Ovary (tissue), 10 donors: ENCODE measurements at regions of chr17 and their contacts with region 1.

Region 1: DNA sequence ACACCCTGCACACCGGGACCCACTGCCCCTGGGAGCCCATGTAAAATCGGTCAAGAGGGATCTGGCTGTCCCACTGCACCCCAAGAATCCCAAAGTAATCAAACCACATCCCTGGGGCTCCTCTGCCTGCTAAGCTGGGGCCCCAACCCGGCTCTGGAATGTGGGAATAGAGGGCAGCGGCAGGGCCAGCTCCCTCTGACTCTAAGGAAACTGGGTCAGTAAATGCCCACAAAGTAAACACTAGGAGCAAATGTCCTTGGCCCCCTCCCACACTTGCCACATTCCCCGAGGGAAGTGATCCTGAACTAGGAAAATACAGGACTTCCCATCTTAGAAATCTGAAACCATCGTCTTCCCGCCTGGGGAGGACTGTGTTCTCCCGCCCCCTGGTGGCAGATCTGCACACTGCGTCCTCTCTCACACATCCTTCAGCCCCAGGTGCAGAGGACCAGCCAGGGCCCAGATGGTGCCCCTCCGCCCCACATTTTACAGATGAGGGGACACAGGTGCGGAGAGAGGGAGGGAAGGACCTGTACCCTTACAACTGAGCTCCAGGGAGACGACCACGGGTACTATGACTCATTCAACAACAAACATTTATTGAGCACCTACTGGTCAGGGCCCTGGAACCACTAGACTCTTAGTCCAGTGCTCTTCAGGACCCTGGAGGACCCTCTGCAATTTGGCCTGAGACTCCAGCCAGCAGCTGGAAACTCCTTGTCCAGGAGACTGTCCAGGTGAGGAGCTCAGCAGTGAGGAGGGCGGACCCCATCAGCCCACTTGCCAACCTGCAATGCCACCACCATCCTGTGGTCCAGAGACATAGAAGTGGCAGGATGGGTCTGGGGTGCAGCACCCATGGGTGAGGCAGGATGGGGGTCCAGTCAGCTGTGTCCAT is 10.1 kb downstream of the P3H4 start:
- DNase-seq: peak; percentile 77 to 91 (median 89)
- H3K4me3 ChIP-seq: no peak overlapping the region
- H3K27ac ChIP-seq: no peak overlapping the region
- H3K4me1 ChIP-seq: peaks cover 7% of the 10 kb centered on the region
- H3K27me3 ChIP-seq: no peaks in the 10 kb centered on the region
- CTCF ChIP-seq: peak; percentile 90 to 97 (median 96)
- EP300 ChIP-seq: no peak
- POLR2A ChIP-seq: no peak

Region 2: GRCh38 chr17:41738077-41738735 is 63.4 kb before region 1 on chr17:
- intact Hi-C with region 1: loop called (anchors 1 to 2 kb)
- DNase-seq: peak; percentile 69 to 89 (median 84)
- H3K4me3 ChIP-seq: no peak overlapping the region
- H3K27ac ChIP-seq: no peak overlapping the region
- H3K4me1 ChIP-seq: peaks cover 4% of the 10 kb centered on the region
- H3K27me3 ChIP-seq: no peaks in the 10 kb centered on the region
- CTCF ChIP-seq: peak; percentile 97 to 99 (median 98)
- EP300 ChIP-seq: no peak
- POLR2A ChIP-seq: no peak

Region 3: DNA sequence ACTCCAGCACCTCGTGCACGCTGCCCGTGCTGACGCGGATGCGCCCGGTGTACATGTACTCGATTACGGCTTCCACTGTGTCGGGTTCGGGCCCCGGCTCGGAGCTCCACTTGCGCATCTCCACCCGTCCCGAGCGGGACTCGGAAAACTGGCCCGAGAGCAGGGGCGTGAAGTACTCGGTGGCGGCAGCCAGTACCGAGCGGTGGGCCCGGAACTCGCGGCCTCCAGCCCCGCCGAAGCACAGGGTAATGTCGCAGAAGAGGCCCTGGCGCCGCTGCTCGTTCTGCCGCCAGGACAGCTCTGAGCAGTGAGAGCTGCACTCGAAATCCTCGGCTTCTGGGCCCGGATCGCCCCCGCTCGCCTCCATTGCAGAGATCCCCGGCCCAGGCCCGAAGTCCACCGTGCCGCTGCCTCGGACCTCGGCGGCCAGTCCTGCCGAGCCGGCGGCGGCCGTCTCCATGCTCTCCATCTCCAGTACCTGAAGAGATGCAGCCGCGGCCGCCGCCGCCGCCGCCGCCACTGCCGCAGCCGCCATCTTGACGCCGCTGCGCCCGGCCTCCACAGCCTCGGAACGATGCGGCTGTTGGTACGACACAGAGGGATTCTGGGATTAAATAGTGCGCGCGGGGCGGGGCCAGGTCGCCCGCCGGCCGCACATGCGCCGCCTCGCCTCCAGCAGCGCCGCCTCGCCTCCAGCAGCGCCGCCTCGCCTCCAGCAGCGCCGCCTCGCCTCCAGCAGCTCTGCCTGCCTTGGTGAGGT is 63.4 kb after region 1 on chr17 and contains the start of gene KLHL11:
- intact Hi-C with region 1: loop called in 1 of 4 experiments (anchors 10 kb)
- DNase-seq: peak; percentile 80 to 92 (median 88)
- H3K4me3 ChIP-seq: peak within 1 kb of the TSS; percentile 99
- H3K27ac ChIP-seq: peak within 1 kb of the TSS; percentile 50 to 85
- H3K4me1 ChIP-seq: peaks cover 10% of the 10 kb centered on the region
- H3K27me3 ChIP-seq: no peaks in the 10 kb centered on the region
- CTCF ChIP-seq: no peak
- EP300 ChIP-seq: no peak
- POLR2A ChIP-seq: peak; percentile 90
- total RNA-seq, gene KLHL11: 18.9 to 30.5 (median 20.6) TPM